ENCODE measurements at regions of chr5 and their contacts with region 1.

Region 1: GRCh38 chr5:177390363-177391300 is 6.4 kb downstream of the SLC34A1 start:
- DNase-seq: peak; percentile 82 to 96
- H3K4me3 ChIP-seq: no peak overlapping the region
- CTCF ChIP-seq: peak in 1 of 3 donors; percentile 67
- POLR2A ChIP-seq: no peak

Region 2: GRCh38 chr5:176744584-176744965 is 646.1 kb before region 1 on chr5:
- intact Hi-C with region 1: no loop called
- DNase-seq: no peak
- H3K4me3 ChIP-seq: no peak overlapping the region
- CTCF ChIP-seq: no peak
- POLR2A ChIP-seq: no peak

Region 3: DNA sequence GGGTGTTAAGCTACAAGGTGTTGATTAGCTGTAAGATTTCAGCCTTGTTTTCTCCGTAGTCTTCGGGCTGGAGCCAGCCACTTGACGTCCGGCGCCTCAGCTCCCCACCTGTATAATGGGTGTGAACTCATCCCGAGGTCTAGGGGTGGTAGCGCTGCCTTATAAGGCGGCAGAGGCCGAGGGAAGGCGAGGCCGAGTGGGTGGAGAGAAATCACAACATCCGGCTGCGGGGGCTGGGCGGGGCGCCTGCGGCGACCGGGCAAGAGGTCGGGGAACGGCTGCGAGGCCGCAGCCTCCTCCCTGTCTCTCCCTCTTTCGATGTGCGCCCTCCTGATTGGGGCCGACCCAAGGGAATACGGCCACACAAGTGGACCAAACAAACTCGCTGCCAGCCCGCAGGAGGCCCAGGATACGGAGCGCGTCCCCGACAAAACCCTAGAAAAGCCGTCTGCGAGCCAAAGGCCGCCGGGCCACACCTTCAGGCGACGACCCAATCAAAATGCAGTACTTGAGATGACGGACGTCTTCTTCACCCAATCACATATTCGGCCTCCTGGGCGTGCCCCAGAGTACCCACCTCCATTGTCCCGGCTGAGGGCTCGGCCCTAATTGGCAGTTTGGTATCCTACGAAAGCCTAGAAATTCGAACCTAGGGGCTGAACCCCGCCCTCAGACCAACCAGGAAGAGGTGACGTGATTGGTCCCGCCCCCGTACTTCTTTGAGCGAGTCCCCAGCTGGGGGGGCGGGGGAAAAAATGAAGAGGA is 35.4 kb after region 1 on chr5:
- intact Hi-C with region 1: loop called (anchors 1 kb)
- DNase-seq: peak; percentile 100
- H3K4me3 ChIP-seq: peak overlapping the region; percentile 8
- CTCF ChIP-seq: no peak
- POLR2A ChIP-seq: no peak

Region 4: GRCh38 chr5:177431317-177432142 is 40.9 kb after region 1 on chr5:
- intact Hi-C with region 1: loop called (anchors 1 kb)
- DNase-seq: peak in 1 of 2 donors; percentile 33
- H3K4me3 ChIP-seq: no peak overlapping the region
- CTCF ChIP-seq: no peak
- POLR2A ChIP-seq: no peak